ENCODE measurements at regions of chr14 and their contacts with region 1.

Region 1: DNA sequence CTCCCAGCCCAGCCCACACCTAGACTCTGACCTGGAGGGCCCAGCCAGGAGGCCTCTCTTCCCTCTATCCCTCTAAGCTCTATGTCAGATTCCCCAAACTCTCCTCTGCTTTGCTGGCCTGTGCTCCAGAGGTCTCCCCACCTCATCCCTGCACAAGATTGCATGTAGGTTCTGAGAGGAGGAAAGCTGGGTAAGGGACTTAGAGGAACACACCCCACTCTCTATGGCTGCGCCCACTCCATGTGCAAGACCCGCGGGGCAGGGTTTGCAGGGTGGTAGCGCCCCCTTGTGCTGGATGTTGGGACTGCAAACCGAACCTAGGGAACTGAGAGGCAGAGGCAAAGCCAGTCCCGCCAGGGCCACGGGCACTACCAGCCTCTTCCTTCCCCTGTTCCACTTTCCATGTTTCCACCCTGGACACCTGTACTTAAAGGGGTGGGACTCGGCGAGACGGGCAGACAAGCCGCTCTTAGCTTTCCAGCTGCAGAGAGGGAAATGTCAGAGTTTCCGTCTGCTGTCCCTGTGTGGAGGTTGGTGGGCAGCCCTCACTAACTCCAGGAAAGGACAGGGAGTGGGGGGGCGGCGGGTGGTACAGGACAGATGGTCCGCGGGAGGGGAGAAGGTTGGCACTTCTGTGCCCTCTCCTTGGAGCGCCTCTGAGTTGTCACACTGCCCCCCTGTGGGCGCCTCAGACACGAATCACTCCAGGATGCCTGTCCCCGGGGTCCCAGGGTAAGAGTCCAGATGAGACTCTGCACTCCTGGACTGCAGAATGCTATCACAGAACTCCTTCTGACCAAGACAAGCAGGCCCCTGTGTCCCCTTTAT is 16.8 kb downstream of the MMP14 start:
- DNase-seq: peak; percentile 96
- H3K4me3 ChIP-seq: peak overlapping the region; percentile 12 to 68 (median 24)
- H3K27ac ChIP-seq: peak overlapping the region in 6 of 8 donors; percentile 60 to 83 (median 74)
- H3K4me1 ChIP-seq: peaks cover 18 to 56% (median 39%) of the 10 kb centered on the region in 6 donors
- H3K27me3 ChIP-seq: peaks cover 0 to 16% (median 0%) of the 10 kb centered on the region in 7 donors
- CTCF ChIP-seq: peak; percentile 91 to 99 (median 97)
- POLR2A ChIP-seq: no peak

Region 2: GRCh38 chr14:22570132-22570949 is 282.8 kb before region 1 on chr14:
- intact Hi-C with region 1: loop called (anchors 10 kb)
- DNase-seq: no peak
- H3K4me3 ChIP-seq: peak overlapping the region in 5 of 8 donors; percentile 4 to 41 (median 15)
- H3K27ac ChIP-seq: peak overlapping the region in 7 of 8 donors; percentile 57 to 96 (median 87)
- H3K4me1 ChIP-seq: peaks cover 19 to 88% (median 59%) of the 10 kb centered on the region in 6 donors
- H3K27me3 ChIP-seq: no peaks in the 10 kb centered on the region
- CTCF ChIP-seq: peak; percentile 90 to 100 (median 95)
- POLR2A ChIP-seq: no peak

Region 3: DNA sequence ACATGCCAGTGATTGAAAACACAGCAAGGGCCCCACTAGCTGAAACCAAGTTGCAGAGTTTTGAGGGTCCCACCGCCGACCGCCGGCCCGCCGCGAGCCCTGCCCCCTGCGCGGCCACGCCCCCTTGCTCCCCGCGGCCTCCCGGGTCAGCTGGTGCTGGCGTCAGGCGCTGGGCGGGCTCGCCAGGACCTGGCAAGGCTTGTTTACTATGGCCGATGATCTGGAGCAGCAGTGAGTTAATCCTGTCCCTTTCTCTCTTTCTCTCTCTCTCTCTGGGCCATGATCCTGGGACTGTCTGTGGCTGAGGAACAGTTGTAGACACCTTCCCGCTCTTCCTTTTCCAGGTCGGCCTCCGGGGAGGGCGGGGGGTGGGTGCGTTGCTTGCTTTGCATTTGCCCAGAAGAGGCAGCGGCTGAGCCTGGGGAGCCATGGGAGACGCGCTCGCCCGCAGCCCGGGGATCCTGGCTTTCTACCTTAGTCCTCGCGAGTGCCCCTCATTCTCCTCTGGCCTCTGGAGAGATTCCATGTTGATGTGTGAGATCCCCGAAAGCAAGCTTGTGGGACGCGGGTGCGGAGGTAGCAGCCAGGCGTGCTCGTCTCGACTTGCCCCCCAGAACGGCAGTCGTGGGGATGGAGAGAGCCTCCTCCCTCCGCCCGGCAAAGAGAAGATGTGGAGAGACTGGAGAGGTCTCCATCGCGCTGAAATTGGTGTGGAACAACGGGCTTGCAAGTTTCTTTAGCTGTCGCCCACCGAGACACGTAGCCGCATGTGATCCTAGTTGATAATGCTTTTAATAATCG is 254.9 kb before region 1 on chr14 and contains the start of gene ABHD4:
- intact Hi-C with region 1: no loop called
- DNase-seq: peak; percentile 96
- H3K4me3 ChIP-seq: peak within 1 kb of the TSS; percentile 59 to 94 (median 72)
- H3K27ac ChIP-seq: peak within 1 kb of the TSS; percentile 49 to 93 (median 88)
- H3K4me1 ChIP-seq: peaks cover 3 to 48% (median 30%) of the 10 kb centered on the region in 6 donors
- H3K27me3 ChIP-seq: no peaks in the 10 kb centered on the region
- CTCF ChIP-seq: no peak
- POLR2A ChIP-seq: peak in 1 of 3 donors; percentile 83
- total RNA-seq, gene ABHD4: 12.0 to 32.8 (median 24.9) TPM

Region 4: DNA sequence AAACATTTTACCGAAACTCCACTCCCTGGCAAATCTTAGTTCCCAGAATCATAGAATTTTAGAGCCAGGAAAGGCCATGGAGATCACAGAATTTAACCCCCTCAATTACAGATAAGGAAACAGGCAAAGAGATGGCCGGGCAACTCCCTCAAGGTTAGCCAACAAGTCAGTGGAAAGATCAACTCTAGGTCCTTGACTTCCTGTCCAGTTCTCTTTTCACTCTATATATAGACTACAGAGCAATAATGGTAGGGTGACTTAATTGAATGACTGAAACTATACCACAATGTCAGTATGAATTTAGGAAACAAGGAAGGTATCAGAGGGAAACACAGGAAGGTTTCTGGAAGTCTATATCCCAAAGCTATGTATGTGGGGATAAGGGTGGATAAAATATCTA is 75.1 kb before region 1 on chr14:
- intact Hi-C with region 1: loop called (anchors 10 kb)
- DNase-seq: no peak
- H3K4me3 ChIP-seq: no peak overlapping the region
- H3K27ac ChIP-seq: peak overlapping the region in 7 of 8 donors; percentile 10 to 81 (median 62)
- H3K4me1 ChIP-seq: peaks cover 0 to 77% (median 30%) of the 10 kb centered on the region in 6 donors
- H3K27me3 ChIP-seq: no peaks in the 10 kb centered on the region
- CTCF ChIP-seq: no peak
- POLR2A ChIP-seq: no peak

Region 5: GRCh38 chr14:22822571-22823098 is 30.5 kb before region 1 on chr14:
- intact Hi-C with region 1: loop called (anchors 2 kb)
- DNase-seq: peak; percentile 93
- H3K4me3 ChIP-seq: peak overlapping the region; percentile 32 to 71 (median 44)
- H3K27ac ChIP-seq: peak overlapping the region; percentile 65 to 89 (median 81)
- H3K4me1 ChIP-seq: peaks cover 25 to 75% (median 60%) of the 10 kb centered on the region in 6 donors
- H3K27me3 ChIP-seq: peaks cover 0 to 8% (median 0%) of the 10 kb centered on the region in 7 donors
- CTCF ChIP-seq: peak; percentile 70 to 94 (median 85)
- POLR2A ChIP-seq: no peak